ENCODE measurements at regions of chr17 and their contacts with region 1.

Region 1: GRCh38 chr17:41548844-41549595 is 20.9 kb upstream of the KRT19 start:
- DNase-seq: peak; percentile 74
- H3K4me3 ChIP-seq: peak overlapping the region in 2 of 3 experiments; percentile 20 to 23
- H3K27ac ChIP-seq: peak overlapping the region; percentile 74
- H3K4me1 ChIP-seq: peaks cover 19% of the 10 kb centered on the region
- H3K27me3 ChIP-seq: no peaks in the 10 kb centered on the region
- CTCF ChIP-seq: peak; percentile 68 to 95
- POLR2A ChIP-seq: peak; percentile 39

Region 2: GRCh38 chr17:40854159-40854814 is 694.7 kb before region 1 on chr17:
- CTCF ChIA-PET with region 1: interaction called, 70 read pairs
- POLR2A ChIA-PET with region 1: no interaction called
- dilution Hi-C with region 1: no loop called
- intact Hi-C with region 1: loop called (anchors 1 kb)
- DNase-seq: peak; percentile 59
- H3K4me3 ChIP-seq: no peak overlapping the region
- H3K27ac ChIP-seq: no peak overlapping the region
- H3K4me1 ChIP-seq: peaks cover 8% of the 10 kb centered on the region
- H3K27me3 ChIP-seq: peaks cover 2 to 5% of the 10 kb centered on the region in 2 experiments
- CTCF ChIP-seq: no peak
- POLR2A ChIP-seq: no peak

Region 3: DNA sequence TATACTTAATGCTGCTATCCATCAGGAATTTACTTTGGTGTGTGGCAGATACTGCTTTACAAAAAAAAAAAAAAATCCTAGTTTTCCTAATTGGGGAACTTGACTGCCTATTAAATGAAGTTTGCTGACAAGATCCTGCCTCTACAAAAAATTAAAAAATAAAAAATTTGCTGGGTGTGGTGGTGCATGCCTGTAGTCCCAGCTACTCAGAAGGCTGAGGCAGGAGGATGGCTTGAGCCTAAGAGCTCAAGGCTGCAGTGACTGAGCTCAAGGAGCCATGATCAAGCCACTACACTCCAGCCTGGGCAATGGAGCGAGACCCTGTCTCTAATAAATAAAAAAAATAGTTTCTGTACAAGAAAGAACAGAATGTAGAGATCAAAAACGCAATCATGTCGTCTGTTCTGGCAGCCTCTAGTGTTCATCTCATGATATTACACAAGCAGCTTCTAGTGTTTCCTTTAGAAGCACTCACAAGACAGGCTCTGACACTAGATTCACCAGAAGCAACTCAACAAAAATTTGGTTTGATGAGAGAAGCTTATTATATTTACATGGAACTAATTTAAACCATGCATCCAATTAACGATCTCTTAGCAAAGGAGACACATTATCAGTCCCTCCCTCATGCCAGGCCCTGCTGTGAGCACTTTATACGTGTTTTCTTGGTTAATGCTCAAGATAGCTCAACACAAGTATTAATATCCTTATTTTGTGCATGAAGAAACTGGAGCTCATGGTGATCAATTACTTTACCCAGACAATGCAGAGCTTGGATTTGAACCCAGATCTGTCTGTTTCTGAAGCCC is 226.7 kb before region 1 on chr17:
- CTCF ChIA-PET with region 1: interaction called, 21 read pairs
- POLR2A ChIA-PET with region 1: no interaction called
- dilution Hi-C with region 1: no loop called
- intact Hi-C with region 1: no loop called
- DNase-seq: peak; percentile 49
- H3K4me3 ChIP-seq: no peak overlapping the region
- H3K27ac ChIP-seq: no peak overlapping the region
- H3K4me1 ChIP-seq: no peaks in the 10 kb centered on the region
- H3K27me3 ChIP-seq: peaks cover 0 to 2% of the 10 kb centered on the region in 2 experiments
- CTCF ChIP-seq: peak; percentile 40 to 69
- POLR2A ChIP-seq: no peak

Region 4: DNA sequence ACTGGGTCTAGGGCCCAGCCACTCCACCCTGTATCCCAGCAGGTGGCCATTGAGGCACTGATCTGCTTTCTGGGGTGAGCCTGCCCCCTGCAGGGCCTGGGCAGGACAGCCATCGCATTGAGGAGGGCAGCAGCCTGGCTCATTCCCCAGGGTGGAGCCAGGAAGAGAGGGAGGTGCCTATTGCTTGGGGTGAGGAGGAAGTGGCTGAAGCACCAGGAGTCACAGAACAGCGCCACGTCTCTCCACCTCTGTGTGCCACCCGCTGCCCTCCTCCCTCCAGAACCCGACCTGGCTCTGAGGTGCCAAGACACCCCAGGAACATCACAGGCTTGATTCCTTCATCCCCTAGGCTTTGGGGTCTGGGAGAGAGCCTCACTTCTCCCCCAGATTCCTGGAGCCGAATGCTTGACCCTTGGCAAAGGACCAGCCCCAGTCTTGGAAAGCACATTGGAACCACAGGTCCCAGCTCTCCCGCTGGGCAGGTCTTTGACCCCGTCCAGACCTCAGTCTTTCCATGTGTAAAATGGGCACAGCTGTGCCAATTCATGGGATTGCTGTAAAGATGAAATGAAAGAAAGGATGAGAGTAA is 52.1 kb before region 1 on chr17:
- CTCF ChIA-PET with region 1: interaction called, 350 read pairs
- POLR2A ChIA-PET with region 1: no interaction called
- dilution Hi-C with region 1: no loop called
- intact Hi-C with region 1: loop called (anchors 1 kb)
- DNase-seq: peak; percentile 83
- H3K4me3 ChIP-seq: no peak overlapping the region
- H3K27ac ChIP-seq: no peak overlapping the region
- H3K4me1 ChIP-seq: peaks cover 38% of the 10 kb centered on the region
- H3K27me3 ChIP-seq: no peaks in the 10 kb centered on the region
- CTCF ChIP-seq: peak; percentile 91 to 92
- POLR2A ChIP-seq: no peak

Region 5: GRCh38 chr17:41530062-41531051 is 18.7 kb before region 1 on chr17:
- CTCF ChIA-PET with region 1: interaction called, 126 read pairs
- POLR2A ChIA-PET with region 1: no interaction called
- dilution Hi-C with region 1: no loop called
- intact Hi-C with region 1: loop called (anchors 1 kb)
- DNase-seq: peak; percentile 90
- H3K4me3 ChIP-seq: no peak overlapping the region
- H3K27ac ChIP-seq: peak overlapping the region; percentile 80
- H3K4me1 ChIP-seq: peaks cover 29% of the 10 kb centered on the region
- H3K27me3 ChIP-seq: no peaks in the 10 kb centered on the region
- CTCF ChIP-seq: no peak
- POLR2A ChIP-seq: peak; percentile 62

Region 6: DNA sequence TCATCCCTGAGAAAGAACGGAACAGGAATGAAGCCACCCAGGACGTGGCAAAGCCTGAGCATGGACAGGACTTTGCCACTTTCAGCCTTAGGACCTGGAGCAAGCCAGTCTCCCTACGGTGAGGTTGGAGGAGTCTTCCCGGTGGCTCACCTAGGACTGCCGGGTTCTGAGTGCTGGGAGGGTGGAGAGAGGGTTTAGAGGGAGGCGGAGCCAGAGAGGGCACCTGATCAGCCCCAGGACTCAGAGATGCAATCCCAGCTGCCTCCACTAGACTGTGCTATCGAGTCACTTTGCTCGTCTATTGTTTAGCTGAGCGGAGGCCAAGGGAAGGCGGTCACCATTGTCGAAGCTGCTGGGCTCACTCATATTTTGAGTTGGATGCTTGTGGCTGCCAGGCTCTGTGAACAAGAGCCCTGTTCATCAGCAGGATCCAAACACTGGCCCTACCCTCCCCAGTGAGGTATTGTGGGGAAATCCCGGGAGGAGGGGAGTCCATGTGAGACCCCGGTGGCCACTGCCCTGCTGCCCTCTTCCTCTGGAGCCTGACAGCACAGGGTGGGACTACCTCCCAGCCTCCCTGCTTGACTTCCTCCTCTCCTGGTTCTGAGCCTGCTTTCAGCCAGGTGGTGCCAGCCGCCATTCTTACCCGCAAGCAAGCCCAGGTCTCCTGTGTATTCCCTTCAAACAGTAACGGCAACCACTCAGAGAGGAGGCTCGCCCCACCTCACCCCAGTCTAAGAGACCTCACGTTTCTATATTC is 30.6 kb after region 1 on chr17:
- CTCF ChIA-PET with region 1: interaction called, 31 read pairs
- POLR2A ChIA-PET with region 1: no interaction called
- dilution Hi-C with region 1: no loop called
- intact Hi-C with region 1: no loop called
- DNase-seq: peak; percentile 81
- H3K4me3 ChIP-seq: no peak overlapping the region
- H3K27ac ChIP-seq: no peak overlapping the region
- H3K4me1 ChIP-seq: no peaks in the 10 kb centered on the region
- H3K27me3 ChIP-seq: peaks cover 0 to 4% of the 10 kb centered on the region in 2 experiments
- CTCF ChIP-seq: peak; percentile 80 to 92
- POLR2A ChIP-seq: no peak

Region 7: DNA sequence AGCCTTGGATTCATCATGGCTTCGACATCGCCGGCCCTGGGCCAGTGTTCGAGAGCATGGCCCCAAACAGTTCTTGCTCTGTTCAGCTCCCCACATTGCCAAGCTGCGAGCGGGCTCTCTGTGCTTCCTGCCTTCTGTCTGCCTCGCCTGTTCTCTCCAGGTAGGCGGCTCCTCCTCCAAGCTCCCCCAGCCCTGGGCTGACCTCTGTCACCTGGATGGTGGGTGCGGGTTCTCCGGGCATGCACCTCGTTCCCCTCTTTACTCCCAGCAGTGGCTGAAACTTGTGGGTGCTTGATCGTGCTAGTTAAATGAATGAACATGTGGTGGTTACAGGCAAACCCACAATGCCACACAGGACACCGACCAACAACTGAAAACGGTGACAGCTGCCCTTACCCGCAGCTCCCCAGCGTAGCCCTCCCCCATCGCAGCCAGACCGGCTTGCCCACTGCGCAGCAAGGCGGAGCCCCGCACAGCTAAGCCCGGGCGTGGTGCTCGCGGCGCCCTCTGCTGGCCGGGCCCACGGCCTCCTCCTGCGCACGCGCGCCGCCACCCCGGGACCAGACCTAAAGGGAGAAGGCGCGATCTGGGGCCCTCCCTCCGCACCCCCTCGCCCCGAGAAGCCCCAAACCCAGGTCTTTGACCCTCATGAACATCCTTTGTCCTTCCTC is 116.7 kb after region 1 on chr17:
- CTCF ChIA-PET with region 1: interaction called, 369 read pairs
- POLR2A ChIA-PET with region 1: no interaction called
- dilution Hi-C with region 1: no loop called
- intact Hi-C with region 1: loop called (anchors 1 kb)
- DNase-seq: peak; percentile 83
- H3K4me3 ChIP-seq: peak overlapping the region in 2 of 3 experiments; percentile 13 to 32
- H3K27ac ChIP-seq: peak overlapping the region; percentile 49
- H3K4me1 ChIP-seq: peaks cover 23% of the 10 kb centered on the region
- H3K27me3 ChIP-seq: no peaks in the 10 kb centered on the region
- CTCF ChIP-seq: peak; percentile 96 to 99
- POLR2A ChIP-seq: no peak

Measured in endothelial cell of umbilical vein (primary cell).